Activated CD4-positive, alpha-beta memory T cell treated with anti-CD3 and anti-CD28 coated beads, Interleukin-2, amount 10 ng/mL, durations not matched to agents 7 days and 5 days (primary cell): ENCODE measurements at regions of chr16 and their contacts with region 1.

Region 1: GRCh38 chr16:68367030-68367429 is 56.2 kb downstream of the PRMT7 start:
- DNase-seq: peak; percentile 53
- H3K4me3 Mint-ChIP-seq: no peak overlapping the region
- H3K27ac Mint-ChIP-seq: no peak overlapping the region
- H3K4me1 Mint-ChIP-seq: peaks cover 35% of the 10 kb centered on the region
- H3K27me3 Mint-ChIP-seq: peaks cover 40% of the 10 kb centered on the region

Region 2: DNA sequence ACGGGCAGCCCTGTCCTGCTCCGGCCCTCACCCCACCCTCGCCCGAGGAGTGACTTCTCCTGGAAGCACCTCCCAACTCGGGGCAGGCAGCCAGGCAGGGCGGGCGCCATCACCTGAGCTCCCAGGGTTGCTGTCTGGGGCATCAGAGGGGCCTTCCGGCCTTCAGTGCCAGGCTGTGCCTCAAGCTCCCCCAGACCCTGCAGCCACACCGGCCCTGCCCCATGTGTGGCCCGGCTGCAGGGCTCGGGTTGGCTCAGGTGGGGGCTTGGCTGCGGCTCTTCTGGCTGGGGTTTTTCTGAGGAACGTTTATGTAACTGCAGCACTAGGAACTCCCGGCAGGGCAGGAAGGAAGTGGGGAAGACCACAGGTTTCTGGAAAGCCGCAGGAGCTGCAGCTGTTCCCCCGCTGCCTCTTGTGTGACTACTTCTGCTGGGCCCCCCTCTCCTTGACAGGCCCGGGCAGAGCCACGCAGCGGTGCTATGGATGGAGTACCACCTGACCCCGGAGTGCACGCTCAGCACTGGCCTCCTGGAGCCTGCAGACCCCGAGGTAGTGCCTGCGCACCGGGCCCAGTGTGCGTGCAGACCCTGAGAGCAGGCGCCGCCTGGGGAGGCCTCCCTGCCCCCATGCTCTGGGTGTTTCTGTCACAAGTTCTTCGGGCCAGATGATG is 10.6 kb before region 1 on chr16:
- CTCF ChIA-PET with region 1: interaction called, 12 read pairs
- POLR2A ChIA-PET with region 1: interaction called, 14 read pairs
- DNase-seq: peak; percentile 87
- H3K4me3 Mint-ChIP-seq: peak overlapping the region; percentile 43
- H3K27ac Mint-ChIP-seq: peak overlapping the region; percentile 18
- H3K4me1 Mint-ChIP-seq: peaks cover 36% of the 10 kb centered on the region
- H3K27me3 Mint-ChIP-seq: no peaks in the 10 kb centered on the region